Ascending aorta (tissue), 2 donors: ENCODE measurements at regions of chr3 and their contacts with region 1.

Region 1: DNA sequence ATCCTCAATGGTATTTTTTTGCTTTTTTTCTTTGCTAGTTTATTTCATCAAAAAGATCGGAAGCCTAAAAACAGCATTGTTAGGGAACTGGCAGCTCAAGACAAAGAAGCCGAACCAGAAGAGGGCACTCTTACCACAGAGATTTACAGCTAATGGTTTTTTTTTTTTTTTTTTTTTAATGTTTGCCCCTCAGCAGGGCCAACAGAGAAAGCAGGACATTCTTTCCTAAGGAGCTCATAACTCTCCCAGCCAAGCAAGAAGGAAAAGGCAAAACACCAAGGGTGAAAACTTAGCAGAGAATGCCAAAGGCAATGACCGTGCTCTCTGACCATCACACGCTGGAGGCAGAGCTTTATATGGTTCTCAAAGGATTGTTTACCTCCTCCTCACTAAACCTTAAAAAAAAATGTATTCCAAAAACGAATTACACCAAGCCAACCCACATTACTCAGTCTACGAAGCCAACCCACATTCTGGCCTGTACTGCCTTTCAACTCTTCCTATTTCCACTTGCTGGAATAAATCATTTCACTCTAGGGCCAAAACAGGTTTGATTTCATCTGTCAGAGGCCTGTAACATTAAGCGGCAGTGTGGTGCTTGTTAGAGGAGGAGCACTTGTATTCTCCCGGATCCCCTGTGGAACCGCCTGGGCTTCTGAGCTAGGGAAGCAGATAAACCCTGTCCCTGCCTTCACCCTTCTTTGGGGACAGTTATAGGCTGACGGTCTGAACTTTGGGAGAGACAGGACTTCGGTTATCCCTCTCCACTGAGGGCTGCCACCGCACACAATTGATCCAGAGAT is 35.6 kb upstream of the GYG1 start:
- DNase-seq: peak; percentile 16 to 89
- H3K4me3 ChIP-seq: no peak overlapping the region
- H3K27ac ChIP-seq: peak overlapping the region; percentile 89 to 98
- H3K4me1 ChIP-seq: peaks cover 5 to 28% of the 10 kb centered on the region in 2 donors
- H3K27me3 ChIP-seq: no peaks in the 10 kb centered on the region
- CTCF ChIP-seq: peak; percentile 52 to 66 (median 54)

Region 2: GRCh38 chr3:149016669-149017541 is 61.2 kb after region 1 on chr3:
- intact Hi-C with region 1: loop called (anchors 5 kb)
- DNase-seq: no peak
- H3K4me3 ChIP-seq: no peak overlapping the region
- H3K27ac ChIP-seq: peak overlapping the region; percentile 84 to 90
- H3K4me1 ChIP-seq: peaks cover 11 to 69% of the 10 kb centered on the region in 2 donors
- H3K27me3 ChIP-seq: no peaks in the 10 kb centered on the region
- CTCF ChIP-seq: no peak

Region 3: GRCh38 chr3:149129326-149130205 is 173.8 kb after region 1 on chr3 and contains the start of gene HPS3:
- intact Hi-C with region 1: loop called (anchors 2 kb)
- DNase-seq: peak; percentile 76 to 96
- H3K4me3 ChIP-seq: peak within 1 kb of the TSS; percentile 73 to 94
- H3K27ac ChIP-seq: peak within 1 kb of the TSS; percentile 87 to 89
- H3K4me1 ChIP-seq: peaks cover 0 to 12% of the 10 kb centered on the region in 2 donors
- H3K27me3 ChIP-seq: no peaks in the 10 kb centered on the region
- CTCF ChIP-seq: peak in 1 of 3 experiments; percentile 22
- total RNA-seq, gene HPS3: 18.9 TPM

Region 4: DNA sequence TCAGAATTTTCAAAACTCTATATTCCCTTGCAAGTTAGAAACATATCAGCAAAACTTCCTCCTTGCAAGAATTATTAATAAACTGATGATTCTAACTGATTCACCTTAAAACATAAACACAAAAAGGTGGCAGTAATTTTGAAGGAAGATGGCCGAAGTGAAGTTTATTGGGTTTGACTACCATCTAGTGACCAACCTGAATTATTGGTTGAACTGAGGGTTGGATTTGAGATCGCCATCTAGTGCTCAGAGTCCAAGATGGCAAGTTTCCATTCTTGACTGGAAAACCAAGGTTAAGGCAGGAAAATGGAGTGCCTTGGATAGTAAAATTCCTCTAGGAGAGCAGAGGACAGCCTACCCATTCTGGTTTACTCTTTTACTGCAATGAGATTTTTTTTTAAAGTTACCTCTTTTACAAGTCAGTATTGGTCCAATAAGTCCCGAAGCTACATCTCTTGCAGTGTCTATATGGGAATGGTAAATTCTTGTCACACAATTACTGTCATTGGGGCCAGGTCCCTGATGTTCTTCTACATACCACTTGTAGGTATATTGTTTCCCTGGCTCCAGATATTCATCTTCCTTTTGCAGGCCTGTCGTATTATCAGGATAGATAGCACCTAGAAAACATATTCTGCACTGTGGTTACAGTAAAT is 317.5 kb after region 1 on chr3:
- intact Hi-C with region 1: loop called (anchors 1 kb)
- DNase-seq: peak in 1 of 2 donors; percentile 78
- H3K4me3 ChIP-seq: no peak overlapping the region
- H3K27ac ChIP-seq: no peak overlapping the region
- H3K4me1 ChIP-seq: peaks cover 0 to 6% of the 10 kb centered on the region in 2 donors
- H3K27me3 ChIP-seq: no peaks in the 10 kb centered on the region
- CTCF ChIP-seq: peak; percentile 90 to 95 (median 92)

Region 5: DNA sequence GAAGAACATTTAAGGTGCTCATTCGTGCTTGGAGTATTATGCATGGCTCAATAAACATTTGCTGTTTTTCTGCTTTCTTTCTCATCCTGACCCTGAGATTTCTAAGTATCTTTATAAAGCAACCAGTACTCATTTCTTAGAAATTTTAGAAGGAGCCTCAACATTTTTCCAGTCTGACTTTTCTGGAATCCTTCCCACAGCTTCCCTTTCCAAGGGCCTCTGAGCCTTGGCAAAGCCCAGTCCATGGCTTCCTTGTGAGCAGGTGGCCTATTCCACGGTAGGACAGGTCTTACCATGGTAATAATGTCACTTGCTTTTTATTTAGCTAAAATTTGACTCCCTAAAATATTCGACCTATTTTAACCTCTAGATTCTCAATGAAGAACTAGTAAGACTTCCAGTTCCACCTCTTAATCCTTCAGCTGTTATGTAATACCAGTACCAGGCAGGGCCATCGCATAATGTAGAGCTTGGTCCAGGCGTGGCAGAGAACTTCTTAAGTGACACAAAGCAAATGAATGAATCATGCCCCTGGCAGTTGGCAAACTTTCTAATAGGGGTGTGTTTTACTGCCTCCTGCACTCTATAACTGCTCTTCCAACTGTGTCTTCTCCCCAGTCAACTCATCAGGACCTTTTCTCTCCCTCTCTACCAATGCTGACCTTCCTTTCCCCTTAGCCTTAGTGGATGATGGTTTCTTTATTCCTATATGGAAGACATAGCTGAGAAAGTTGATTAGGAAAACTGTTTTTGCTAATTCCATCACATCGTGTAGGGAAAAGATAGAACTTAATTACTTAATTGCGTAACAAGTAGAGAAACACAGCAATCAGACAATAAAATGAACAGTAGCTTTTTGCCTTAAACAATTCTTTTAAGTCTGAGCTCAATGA is 517.9 kb after region 1 on chr3:
- intact Hi-C with region 1: loop called (anchors 10 kb)
- DNase-seq: peak; percentile 30 to 88
- H3K4me3 ChIP-seq: no peak overlapping the region
- H3K27ac ChIP-seq: peak overlapping the region; percentile 67 to 72
- H3K4me1 ChIP-seq: peaks cover 6 to 24% of the 10 kb centered on the region in 2 donors
- H3K27me3 ChIP-seq: no peaks in the 10 kb centered on the region
- CTCF ChIP-seq: no peak